Activated CD4-positive, alpha-beta T cell treated with anti-CD3 and anti-CD28 coated beads, Interleukin-2, amount 10 ng/mL, durations not matched to agents 24 days and 14 days (primary cell): ENCODE measurements at regions of chr16 and their contacts with region 1.

Region 1: GRCh38 chr16:55465077-55465896 is 13.7 kb upstream of the MMP2 start:
- DNase-seq: peak; percentile 95
- H3K4me3 Mint-ChIP-seq: no peak overlapping the region
- H3K27ac Mint-ChIP-seq: peak overlapping the region; percentile 42
- H3K4me1 Mint-ChIP-seq: peaks cover 6% of the 10 kb centered on the region
- H3K27me3 Mint-ChIP-seq: no peaks in the 10 kb centered on the region

Region 2: DNA sequence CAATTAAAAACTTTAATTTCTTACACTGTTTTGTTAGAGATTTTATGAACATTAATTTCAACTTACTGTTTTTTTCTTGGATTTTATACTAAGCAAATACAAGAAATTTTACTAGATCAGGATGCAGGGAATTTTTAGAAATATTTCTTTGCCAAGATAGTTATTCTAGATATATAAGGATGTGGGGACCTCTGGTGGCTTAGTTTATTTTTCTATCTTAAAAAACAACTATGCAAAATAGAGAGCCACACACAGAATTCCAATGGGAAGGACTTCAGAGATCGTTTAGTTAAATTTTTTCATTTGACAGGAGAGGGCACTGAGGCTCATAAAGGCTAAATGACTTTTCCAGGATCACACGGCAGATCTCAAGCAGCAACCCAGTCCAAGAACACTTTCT is 78.2 kb after region 1 on chr16:
- intact Hi-C with region 1: loop called (anchors 1 kb)
- DNase-seq: no peak
- H3K4me3 Mint-ChIP-seq: no peak overlapping the region
- H3K27ac Mint-ChIP-seq: no peak overlapping the region
- H3K4me1 Mint-ChIP-seq: no peaks in the 10 kb centered on the region
- H3K27me3 Mint-ChIP-seq: no peaks in the 10 kb centered on the region

Region 3: GRCh38 chr16:55703003-55704001 is 238.0 kb after region 1 on chr16:
- intact Hi-C with region 1: loop called (anchors 1 kb)
- DNase-seq: peak; percentile 72
- H3K4me3 Mint-ChIP-seq: no peak overlapping the region
- H3K27ac Mint-ChIP-seq: no peak overlapping the region
- H3K4me1 Mint-ChIP-seq: peaks cover 3% of the 10 kb centered on the region
- H3K27me3 Mint-ChIP-seq: peaks cover 5% of the 10 kb centered on the region

Region 4: DNA sequence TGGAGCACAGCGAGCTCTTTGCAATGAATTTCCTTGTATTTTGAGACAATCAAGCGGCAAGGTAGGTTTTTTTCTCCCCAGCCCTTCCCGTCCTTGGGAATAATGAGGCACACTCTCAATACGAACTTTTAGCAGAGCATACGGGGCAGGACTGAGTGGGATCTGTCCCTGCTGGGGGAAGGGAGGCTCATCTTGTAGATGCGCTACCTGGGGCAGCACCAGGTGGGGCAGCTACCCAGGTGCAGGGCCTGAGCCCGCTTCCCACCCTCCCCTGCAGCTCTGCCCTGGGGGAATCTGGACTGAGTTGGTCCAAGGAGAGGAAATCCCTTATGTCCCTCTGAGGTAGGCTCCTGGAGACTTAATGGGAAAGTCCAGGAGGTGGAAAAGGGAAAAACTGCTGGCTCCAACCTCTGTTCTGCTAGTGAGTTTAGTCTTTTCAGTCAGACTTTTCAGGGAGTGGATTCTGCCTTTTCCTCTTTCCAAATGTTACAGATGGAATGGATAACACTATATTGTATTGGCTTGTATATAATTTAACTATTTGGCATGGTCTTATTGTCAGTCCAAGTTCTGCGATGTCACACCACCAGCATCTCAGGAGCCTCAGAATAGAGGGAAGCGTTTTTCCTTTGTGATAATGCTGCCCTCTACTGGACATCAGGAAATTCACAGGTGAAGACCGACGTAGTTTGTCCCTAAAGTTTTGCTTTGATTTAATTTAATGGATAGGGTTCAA is 377.2 kb after region 1 on chr16:
- intact Hi-C with region 1: loop called (anchors 1 kb)
- DNase-seq: peak; percentile 75
- H3K4me3 Mint-ChIP-seq: no peak overlapping the region
- H3K27ac Mint-ChIP-seq: no peak overlapping the region
- H3K4me1 Mint-ChIP-seq: no peaks in the 10 kb centered on the region
- H3K27me3 Mint-ChIP-seq: peaks cover 8% of the 10 kb centered on the region